Posterior vena cava (tissue), 2 donors: ENCODE measurements at regions of chr16 and their contacts with region 1.

Region 1: DNA sequence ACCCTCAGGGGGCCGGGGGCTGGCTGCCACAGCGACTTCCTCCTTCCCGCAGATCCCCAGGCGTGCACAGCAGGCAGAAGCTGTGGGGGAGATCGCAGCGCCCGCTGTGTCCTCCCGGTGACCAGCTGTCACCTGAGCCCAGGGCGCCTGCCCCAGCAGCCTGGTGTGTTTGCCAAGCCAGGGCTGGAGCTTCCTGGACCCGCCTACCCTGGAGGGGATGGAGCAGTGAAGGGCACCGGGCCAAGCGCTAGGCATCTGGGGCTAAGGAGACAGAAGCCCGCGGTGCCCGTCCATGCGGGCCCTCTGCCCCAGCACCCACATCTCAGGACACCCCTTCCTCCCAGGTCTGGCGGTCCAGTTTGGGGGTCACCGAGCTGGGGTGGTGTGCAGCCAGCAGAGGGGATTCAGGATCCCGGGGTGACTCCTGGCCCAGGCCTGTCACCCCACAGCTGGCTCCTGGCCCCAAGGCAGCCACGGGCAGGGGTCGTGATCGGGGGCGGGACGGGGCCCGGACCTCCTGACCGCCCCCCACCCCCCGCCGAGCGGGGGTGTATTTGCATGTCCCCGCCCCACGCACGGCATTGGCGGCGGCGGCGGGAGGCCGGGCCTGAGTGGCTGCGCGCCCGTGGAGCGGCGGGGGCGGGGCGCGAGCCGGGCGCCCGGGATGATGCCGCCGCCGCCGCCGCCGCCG is at the start of gene RAB26:
- DNase-seq: peak; percentile 85
- total RNA-seq, gene RAB26: 0.28 TPM in 1 of 2 donors, not detected in the other

Region 2: DNA sequence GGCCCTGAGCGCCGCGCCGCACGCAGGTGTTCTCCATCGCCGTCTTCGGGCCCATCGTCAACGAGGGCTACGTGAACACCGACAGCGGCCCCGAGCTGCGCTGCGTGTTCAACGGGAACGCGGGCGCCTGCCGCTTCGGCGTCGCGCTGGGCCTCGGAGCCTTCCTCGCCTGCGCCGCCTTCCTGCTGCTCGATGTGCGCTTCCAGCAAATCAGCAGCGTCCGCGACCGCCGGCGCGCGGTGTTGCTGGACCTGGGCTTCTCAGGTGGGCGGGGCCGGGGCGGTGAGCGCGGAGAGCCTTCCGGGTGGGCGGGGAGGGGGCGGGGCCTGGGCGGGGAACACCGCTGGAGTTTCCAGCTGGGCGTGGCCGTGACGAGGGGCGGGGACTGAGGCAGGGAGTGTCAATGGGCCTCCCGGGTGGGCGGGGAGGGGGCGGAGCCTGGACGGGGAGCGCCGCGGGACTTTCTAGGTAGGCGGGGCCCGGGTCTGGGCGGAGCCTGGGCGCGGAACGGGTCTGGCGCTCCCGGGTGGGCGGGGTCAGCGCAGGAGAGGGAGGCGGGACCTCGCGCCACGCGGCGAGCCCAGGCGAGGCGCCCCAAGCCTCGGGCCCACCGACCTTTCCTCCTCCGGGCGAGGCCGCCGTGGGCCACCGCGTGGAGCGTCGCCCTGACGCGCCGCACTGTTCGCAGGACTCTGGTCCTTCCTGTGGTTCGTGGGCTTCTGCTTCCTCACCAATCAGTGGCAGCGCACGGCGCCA is 156.0 kb before region 1 on chr16:
- intact Hi-C with region 1: no loop called
- DNase-seq: peak; percentile 98

Region 3: DNA sequence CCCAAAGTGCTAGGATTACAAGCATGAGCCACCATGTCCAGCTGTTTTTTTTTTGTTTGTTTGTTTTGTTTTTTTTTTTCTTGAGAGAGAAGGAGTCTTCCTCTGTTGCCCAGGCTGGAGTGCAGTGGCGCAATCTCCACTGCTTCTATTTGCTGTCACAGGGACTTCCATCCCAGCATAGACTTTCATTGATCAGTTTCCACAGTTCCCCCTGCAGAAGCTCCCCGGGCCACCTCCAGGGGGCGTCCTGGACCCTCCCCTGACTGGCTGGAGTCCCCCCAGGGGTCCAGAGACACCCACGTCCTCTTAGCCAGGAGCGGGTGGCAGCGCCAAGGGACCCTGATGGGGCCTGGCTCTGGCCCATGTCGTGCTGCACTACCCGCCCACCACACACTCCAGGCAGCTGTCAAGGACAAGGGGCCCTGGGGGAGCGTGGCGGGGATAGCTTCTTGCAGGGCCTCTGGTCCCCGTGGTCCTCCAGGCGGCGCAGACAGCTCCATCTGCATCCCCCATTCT is 131.7 kb before region 1 on chr16:
- intact Hi-C with region 1: loop called (anchors 5 kb)
- DNase-seq: no peak

Region 4: DNA sequence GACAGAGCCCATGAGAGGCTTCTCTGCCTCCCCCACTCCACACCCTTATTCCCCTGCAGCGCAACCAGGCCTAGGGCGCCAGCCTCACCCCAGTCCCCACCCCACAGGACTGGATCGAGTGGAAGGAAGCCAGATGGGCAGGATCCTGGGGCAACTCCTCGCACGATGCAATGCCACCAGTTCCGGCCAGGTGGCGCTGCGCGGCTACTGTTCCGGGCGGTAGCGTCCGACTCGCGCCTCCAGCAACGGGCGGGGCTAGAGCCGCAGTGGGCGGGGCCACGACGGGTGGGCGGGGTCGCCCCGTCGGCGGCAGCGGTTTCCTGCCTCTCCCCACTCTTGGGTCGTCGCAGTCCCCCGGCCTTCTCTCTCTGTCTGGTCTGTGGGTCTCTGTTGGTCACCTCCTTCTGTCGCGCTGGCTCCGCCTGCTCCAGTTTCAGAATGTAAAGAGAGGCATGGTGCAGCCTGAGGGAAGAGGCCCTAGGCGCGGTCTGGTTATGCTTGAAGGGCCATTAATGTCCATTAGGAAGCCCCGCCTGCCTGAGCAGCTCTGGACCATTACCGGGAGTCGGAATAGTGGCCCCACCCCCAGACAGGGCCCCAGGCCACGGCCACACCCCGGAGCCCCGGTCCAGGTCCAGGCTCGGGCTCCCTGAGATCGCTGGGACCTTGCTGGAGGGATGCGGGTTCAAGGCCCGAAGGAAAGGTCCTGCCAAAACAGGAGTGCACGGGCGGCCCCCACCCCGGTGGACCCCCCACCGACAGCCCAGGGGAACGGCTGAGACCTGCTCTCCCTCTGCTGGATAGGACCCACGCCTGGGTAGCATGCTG is 124.8 kb before region 1 on chr16:
- intact Hi-C with region 1: loop called (anchors 5 kb)
- DNase-seq: peak; percentile 99